Left ventricle myocardium superior (tissue), 1 donor: ENCODE measurements at regions of chr14 and their contacts with region 1.

Region 1: DNA sequence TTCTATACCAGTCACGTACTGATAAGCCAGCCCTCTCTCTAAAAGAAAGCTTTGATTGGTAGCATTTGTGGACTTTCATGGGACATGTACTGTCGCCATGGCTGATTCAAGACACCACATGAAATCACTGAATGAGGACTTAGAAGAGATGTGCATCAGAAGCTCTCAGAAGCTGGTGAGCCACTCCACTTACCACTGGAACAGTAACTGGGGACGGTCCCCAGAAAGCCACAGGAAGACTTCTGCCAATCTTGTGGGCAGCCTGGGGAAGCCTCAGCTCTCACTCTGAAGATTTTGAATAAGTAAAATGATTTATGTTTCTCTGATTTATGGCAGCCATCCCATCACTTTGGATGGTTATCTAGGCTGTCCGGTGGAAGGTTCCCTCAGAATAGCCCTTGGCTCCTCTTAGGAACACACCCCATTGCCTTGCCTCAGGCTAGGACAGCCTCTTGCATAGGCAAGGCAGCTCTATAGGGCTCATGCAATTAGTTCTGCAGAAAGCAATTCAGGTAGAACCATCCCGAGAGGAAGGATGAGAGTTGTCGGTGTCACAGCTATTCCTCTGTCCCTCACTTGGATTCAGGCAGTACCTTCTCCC is 9.8 kb downstream of the DHRS1 start:
- DNase-seq: no peak
- ATAC-seq: no peak

Region 2: GRCh38 chr14:24246765-24247212 is 43.0 kb before region 1 on chr14:
- intact Hi-C with region 1: loop called (anchors 5 kb)
- DNase-seq: no peak
- ATAC-seq: no peak

Region 3: DNA sequence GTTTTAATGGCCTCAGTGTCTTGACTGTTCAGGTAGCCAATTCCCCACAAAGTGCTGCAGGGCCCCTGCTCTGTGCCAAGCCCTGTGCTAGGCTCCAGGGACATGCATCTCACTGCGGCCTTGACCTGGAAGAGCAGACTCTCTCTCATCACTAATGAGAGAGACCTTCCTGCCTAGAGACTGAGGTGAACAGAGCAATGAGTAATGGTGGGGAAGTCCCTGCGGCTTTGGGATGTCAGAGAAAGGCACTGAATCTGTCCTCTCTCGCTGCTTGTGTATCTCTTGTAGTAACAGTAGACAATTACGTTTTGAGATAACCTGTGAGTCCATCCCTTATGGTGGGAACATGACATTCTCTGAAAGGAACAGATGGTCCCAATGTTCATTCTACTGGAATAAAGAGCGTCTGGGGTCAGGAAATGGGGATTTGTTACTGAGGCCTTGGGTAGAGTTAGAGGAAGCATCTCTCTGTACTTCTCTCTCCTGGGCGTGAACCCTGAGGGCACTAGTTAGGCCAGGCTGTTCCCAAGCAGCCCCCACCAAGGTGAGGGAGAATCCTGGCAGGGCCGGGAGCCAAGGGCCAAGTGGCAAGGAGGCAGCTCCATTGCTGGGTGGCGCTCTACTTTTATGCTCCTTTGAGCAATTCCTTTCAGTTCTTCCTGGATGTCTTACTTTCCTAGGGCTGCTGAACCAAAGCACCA is 91.8 kb after region 1 on chr14:
- intact Hi-C with region 1: no loop called
- DNase-seq: no peak
- ATAC-seq: no peak